GM10248 (cell line): ENCODE measurements at regions of chr17 and their contacts with region 1.

Region 1: DNA sequence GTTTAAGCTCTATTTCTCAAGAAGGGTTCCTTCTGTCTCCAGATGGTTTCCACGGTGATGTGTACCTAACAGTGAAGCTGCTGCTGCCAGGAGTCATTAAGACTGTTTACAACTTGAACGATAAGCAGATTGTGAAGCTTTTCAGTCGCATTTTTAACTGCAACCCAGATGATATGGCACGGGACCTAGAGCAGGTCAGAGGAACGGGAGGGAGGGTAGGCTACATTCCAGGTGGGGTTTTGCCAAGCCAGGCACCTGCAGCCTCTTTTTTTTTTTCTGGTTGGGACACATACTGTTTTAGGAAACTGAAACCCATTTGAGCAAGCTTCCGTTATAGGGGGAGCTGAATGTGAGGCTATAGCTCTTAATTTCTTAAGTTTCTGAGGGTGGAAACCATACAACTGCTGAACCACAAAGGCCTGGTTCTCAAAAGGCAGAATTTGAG is 10.6 kb downstream of the LIG3 start:
- DNase-seq: no peak
- CTCF ChIP-seq: no peak

Region 2: GRCh38 chr17:34980681-34981537 is 10.0 kb before region 1 on chr17:
- CTCF ChIA-PET with region 1: interaction called, 16 read pairs
- POLR2A ChIA-PET with region 1: interaction called, 6 read pairs
- DNase-seq: peak; percentile 93
- CTCF ChIP-seq: peak; percentile 69